ENCODE measurements at regions of chr3 and their contacts with region 1.

Region 1: GRCh38 chr3:56107157-56107556 is 361.1 kb downstream of the ERC2 start:
- DNase-seq: no peak
- H3K4me3 ChIP-seq: no peak overlapping the region
- H3K27ac ChIP-seq: no peak overlapping the region
- H3K4me1 ChIP-seq: peaks cover 11% of the 10 kb centered on the region
- H3K27me3 ChIP-seq: no peaks in the 10 kb centered on the region
- CTCF ChIP-seq: no peak
- POLR2A ChIP-seq: no peak

Region 2: DNA sequence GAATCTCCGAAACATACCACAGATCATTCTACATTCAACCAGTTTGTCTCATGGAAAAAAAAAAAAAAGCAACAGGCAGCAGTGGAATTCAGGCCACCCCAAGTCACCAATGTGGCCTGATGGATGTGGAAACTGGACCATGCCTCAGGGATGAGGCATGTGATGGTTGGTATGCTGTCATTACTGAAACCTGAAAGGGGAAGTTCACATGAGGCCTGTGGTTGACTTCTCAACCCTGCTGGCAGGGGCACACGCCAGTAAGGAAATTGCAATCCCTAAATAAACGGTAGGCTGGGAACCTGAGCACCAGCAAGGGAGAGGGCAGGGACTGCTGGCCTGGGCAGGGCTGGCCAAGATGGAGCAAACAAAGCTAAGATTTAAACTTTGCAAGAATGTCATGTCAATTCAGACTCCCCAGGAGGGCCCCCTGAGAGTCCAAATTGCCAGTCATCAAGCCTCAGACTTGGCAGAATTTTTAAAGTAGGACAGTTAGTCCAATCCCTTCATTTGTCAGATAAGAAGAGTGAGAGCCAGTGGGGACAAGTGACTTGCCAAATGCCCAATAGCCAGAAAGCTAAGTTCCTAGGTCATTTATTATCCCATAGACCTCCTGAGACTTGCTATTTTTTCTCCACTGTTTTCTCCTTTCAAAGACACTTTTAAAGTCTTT is 50.7 kb after region 1 on chr3:
- intact Hi-C with region 1: loop called (anchors 2 kb)
- DNase-seq: no peak
- H3K4me3 ChIP-seq: no peak overlapping the region
- H3K27ac ChIP-seq: no peak overlapping the region
- H3K4me1 ChIP-seq: no peaks in the 10 kb centered on the region
- H3K27me3 ChIP-seq: no peaks in the 10 kb centered on the region
- CTCF ChIP-seq: no peak
- POLR2A ChIP-seq: no peak

Region 3: GRCh38 chr3:56314842-56315241 is 207.7 kb after region 1 on chr3:
- intact Hi-C with region 1: no loop called
- DNase-seq: no peak
- H3K4me3 ChIP-seq: no peak overlapping the region
- H3K27ac ChIP-seq: no peak overlapping the region
- H3K4me1 ChIP-seq: no peaks in the 10 kb centered on the region
- H3K27me3 ChIP-seq: no peaks in the 10 kb centered on the region
- CTCF ChIP-seq: no peak
- POLR2A ChIP-seq: no peak

Measured in vagina (tissue), 2 donors.